ENCODE measurements at regions of chr3 and their contacts with region 1.

Region 1: DNA sequence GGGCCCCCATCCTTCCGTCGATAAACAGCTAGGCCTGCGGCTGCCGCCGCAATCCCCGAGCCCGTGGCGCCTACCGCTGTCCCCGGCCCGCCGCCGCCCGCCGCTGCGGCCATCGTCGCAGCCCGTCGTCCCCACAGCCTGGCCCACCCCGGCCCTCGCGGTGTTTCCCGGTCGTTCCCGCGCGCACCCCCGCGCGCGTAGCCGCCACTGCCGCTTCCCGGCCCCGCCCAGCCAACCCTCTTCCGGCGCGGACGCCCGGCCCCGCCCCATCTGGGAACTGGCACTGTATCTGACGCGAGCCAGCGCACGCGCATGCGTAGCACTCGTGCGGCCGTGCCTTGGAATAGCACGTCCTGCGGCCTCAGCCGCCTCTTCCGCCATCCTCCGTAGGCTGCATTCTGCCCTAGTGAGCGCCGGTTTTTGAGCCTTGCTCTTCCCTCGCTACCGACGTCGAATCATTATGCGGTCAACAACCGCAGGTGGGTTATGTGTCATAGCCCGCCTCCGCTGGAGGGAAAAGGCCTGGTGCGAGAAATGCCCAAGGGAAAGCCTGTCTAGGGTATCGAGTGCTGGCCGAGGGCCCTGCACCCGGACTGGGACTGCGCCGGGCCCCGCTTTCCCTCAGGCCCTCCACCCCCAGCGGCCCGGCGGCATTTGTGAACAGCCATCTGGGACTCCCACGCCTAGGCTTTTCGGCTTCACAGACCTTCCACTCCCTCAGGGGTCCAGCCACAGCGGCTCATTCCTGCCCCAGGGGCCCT is at the start of gene SMARCC1:
- DNase-seq: peak; percentile 97 to 99
- ATAC-seq: peak; percentile 94
- total RNA-seq, gene SMARCC1: 55.6 to 66.4 TPM

Region 2: DNA sequence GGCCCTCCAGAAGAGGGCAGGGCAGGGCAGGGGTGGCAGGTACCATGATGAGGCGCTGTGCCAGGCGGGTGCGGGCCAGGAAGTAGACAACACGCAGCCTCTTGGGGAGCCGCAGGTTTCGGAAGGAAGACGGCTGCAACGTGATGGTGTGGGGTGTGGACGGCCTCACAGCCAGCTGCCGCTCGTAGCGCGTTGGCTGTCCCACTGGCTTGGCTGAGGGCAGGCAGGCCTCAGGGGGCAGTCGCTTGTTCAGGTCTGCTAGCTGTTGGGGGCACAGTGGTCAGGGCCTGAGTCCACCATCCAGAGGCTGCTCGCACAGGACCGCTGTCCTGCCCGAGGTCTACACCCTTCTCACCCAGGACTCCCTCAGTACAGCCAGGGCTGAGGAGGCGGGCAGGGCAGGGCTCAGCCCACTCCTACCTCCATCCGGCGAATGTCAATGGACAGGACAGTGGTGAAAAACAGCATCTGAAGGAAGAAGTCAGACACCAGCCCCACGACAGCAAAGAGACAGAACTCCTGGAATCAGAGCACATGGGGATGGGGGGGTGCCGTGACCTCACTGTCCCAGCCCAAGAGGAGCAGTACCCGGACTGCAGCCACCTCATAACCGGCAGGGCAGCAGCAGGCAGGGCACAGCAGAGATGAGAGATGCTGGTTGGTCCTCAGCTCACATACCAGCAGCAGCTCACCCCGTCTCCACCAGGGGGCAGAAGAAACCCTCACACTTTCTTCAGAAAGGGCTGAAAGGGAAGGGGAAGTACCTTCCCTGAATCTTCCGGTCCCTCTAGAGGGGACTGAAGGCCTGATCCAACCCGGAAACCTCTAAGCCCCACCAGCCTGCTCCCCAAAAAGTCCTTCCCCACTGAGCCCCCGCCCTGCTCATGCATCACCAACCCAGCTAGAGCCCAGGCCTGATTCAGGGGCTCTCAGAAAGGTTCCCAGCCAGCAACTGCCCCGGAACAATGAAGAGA is 361.1 kb before region 1 on chr3:
- intact Hi-C with region 1: loop called in 1 of 2 experiments (anchors 10 kb)
- DNase-seq: peak; percentile 76 to 94
- ATAC-seq: peak; percentile 69

Region 3: GRCh38 chr3:47522082-47522987 is 259.5 kb before region 1 on chr3:
- intact Hi-C with region 1: loop called in 1 of 2 experiments (anchors 5 kb)
- DNase-seq: peak; percentile 77 to 85
- ATAC-seq: peak; percentile 97

Region 4: GRCh38 chr3:47583320-47584075 is 198.4 kb before region 1 on chr3:
- intact Hi-C with region 1: no loop called
- DNase-seq: no peak
- ATAC-seq: no peak

Region 5: GRCh38 chr3:47741925-47742324 is 39.9 kb before region 1 on chr3:
- intact Hi-C with region 1: no loop called
- DNase-seq: no peak
- ATAC-seq: no peak

Region 6: GRCh38 chr3:47890828-47891612 is 109.2 kb after region 1 on chr3:
- intact Hi-C with region 1: no loop called
- DNase-seq: peak in 1 of 2 donors; percentile 33
- ATAC-seq: peak; percentile 14

Region 7: GRCh38 chr3:48188266-48189201 is 406.7 kb after region 1 on chr3 and contains the start of gene CDC25A:
- intact Hi-C with region 1: no loop called
- DNase-seq: peak; percentile 95 to 99
- ATAC-seq: peak; percentile 86
- total RNA-seq, gene CDC25A: 4.0 to 6.6 TPM